CD8-positive, alpha-beta memory T cell (primary cell): ENCODE measurements at regions of chr10 and their contacts with region 1.

Region 1: GRCh38 chr10:7818295-7819122 is at the start of gene TAF3:
- DNase-seq: peak; percentile 86 to 93 (median 87)
- H3K4me3 ChIP-seq: peak within 1 kb of the TSS; percentile 87
- H3K4me3 Mint-ChIP-seq: peak within 1 kb of the TSS; percentile 94 to 100 (median 97)
- H3K27ac ChIP-seq: peak within 1 kb of the TSS; percentile 59
- H3K27ac Mint-ChIP-seq: peak within 1 kb of the TSS; percentile 79 to 96 (median 90)
- H3K4me1 ChIP-seq: peaks cover 23% of the 10 kb centered on the region
- H3K4me1 Mint-ChIP-seq: peaks cover 35 to 51% (median 44%) of the 10 kb centered on the region in 3 donors
- H3K27me3 ChIP-seq: no peaks in the 10 kb centered on the region
- H3K27me3 Mint-ChIP-seq: peaks cover 0 to 8% of the 10 kb centered on the region in 2 donors
- total RNA-seq, gene TAF3: 22.5 to 22.6 TPM

Region 2: GRCh38 chr10:7561216-7561893 is 257.2 kb before region 1 on chr10:
- CTCF ChIA-PET with region 1: no interaction called
- POLR2A ChIA-PET with region 1: no interaction called
- DNase-seq: no peak
- H3K4me3 ChIP-seq: no peak overlapping the region
- H3K4me3 Mint-ChIP-seq: peak overlapping the region in 1 of 7 donors; percentile 54
- H3K27ac ChIP-seq: no peak overlapping the region
- H3K27ac Mint-ChIP-seq: no peak overlapping the region
- H3K4me1 ChIP-seq: no peaks in the 10 kb centered on the region
- H3K4me1 Mint-ChIP-seq: no peaks in the 10 kb centered on the region
- H3K27me3 ChIP-seq: no peaks in the 10 kb centered on the region
- H3K27me3 Mint-ChIP-seq: peaks cover 4 to 19% of the 10 kb centered on the region in 2 donors

Region 3: DNA sequence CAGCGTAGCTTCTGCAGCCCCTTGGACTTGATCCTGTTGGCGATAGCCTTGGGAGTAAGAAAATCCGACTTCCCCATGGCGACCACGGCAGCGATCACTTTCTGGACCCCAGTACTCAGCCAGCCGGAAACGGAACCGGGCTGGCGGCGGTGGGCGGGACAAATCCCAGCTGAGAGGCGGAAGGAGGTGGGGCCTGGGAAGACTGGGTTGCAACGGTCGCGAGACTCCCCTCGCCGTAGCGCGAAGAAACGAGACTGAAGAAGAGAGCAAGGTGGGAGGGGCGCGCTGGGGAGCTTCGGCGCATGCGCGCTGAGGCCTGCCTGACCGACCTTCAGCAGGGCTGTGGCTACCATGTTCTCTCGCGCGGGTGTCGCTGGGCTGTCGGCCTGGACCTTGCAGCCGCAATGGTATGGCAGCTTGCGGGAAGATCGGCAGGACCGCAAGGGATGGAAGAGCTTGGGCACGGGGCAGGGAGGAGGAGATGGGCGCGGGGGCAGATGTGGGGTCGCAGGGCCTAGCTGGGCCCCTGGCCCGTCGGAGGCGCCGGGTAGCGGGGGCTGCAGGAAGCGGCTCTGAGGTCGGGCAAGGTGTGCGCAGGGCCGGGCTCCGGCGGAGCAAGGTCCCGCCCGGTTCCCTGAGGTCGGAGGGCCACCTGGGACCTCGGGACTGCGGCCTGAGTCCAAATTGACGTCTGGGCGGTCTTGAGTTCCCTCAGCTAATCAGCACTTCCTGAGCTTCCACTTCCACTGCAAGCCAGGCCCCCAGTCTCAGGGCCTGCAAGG is 30.5 kb before region 1 on chr10 and contains the starts of genes ATP5F1C and KIN:
- CTCF ChIA-PET with region 1: interaction called, 12 read pairs
- POLR2A ChIA-PET with region 1: interaction called, 39 read pairs
- DNase-seq: peak; percentile 97 to 98 (median 97)
- H3K4me3 ChIP-seq: peak within 1 kb of the TSS; percentile 86
- H3K4me3 Mint-ChIP-seq: no peak within 1 kb of the TSS
- H3K27ac ChIP-seq: peak within 1 kb of the TSS; percentile 77
- H3K27ac Mint-ChIP-seq: peak within 1 kb of the TSS in 1 of 8 donors; percentile 84
- H3K4me1 ChIP-seq: peaks cover 47% of the 10 kb centered on the region
- H3K4me1 Mint-ChIP-seq: peaks cover 66 to 70% (median 70%) of the 10 kb centered on the region in 3 donors
- H3K27me3 ChIP-seq: no peaks in the 10 kb centered on the region
- H3K27me3 Mint-ChIP-seq: no peaks in the 10 kb centered on the region
- total RNA-seq, gene ATP5F1C: 272 to 309 TPM
- total RNA-seq, gene KIN: 15.4 to 17.7 TPM